Heart right ventricle (tissue), 16 donors: ENCODE measurements at regions of chr15 and their contacts with region 1.

Region 1: GRCh38 chr15:55789066-55789660 is 46.2 kb upstream of the PRTG start:
- DNase-seq: peak; percentile 24 to 38
- ATAC-seq: no peak
- H3K4me3 ChIP-seq: no peak overlapping the region
- H3K27ac ChIP-seq: no peak overlapping the region
- H3K4me1 ChIP-seq: no peaks in the 10 kb centered on the region
- H3K27me3 ChIP-seq: no peaks in the 10 kb centered on the region
- CTCF ChIP-seq: peak in 7 of 9 donors; percentile 39 to 63 (median 55)

Region 2: DNA sequence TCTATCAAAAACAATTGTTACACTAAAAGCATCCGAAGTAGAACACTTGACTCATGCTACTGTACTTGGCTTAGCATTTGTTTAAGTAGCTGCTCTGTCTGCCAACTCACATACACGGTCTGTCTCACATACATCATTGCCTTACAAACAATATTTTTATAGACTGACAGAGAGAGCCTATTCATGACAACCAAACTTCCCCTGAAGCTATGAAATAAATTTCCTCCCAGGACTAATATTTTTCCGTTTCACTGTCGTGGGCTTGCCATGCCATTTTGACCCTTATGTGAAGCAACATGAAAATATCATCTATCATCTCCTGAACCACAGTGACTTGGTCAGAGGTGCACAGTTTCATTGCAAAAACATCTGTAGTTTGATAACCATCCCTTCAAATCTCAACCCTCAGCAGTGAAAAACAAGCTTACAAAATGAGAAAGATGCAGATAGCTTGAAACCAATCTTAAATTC is 134.6 kb before region 1 on chr15:
- intact Hi-C with region 1: no loop called
- DNase-seq: no peak
- ATAC-seq: no peak
- H3K4me3 ChIP-seq: no peak overlapping the region
- H3K27ac ChIP-seq: no peak overlapping the region
- H3K4me1 ChIP-seq: no peaks in the 10 kb centered on the region
- H3K27me3 ChIP-seq: no peaks in the 10 kb centered on the region
- CTCF ChIP-seq: no peak

Region 3: DNA sequence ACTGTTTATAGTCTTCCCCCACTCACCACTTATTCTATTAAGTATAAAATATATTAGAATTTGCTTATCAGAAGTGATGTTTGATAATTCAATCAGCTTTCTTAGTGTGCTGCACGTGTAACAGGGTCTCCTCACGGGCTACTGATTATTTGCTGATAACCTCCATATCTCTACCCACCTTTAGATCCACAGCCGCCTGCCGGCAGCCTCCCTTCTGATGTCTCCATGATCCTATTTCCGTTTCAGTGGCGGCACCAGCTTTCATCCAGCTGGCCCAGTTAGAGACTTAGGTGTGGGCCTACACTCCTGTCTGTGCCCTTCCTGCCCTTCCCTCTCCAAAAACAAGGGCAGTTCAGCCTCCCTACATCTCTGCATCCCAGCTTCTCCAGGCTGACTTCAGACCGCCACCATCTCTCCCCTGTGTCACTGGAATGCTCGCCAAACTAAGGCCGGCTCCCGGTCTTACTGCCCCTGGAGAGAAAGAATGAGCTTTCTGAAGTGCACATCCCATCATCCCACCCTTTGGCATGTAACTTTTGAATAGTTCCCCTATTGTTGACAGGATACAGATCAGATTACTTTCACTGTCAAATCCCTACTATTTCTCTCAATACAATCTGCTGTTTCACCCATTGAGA is 30.4 kb after region 1 on chr15:
- intact Hi-C with region 1: no loop called
- DNase-seq: no peak
- ATAC-seq: no peak
- H3K4me3 ChIP-seq: no peak overlapping the region
- H3K27ac ChIP-seq: peak overlapping the region in 1 of 10 donors; percentile 30
- H3K4me1 ChIP-seq: peaks cover 0 to 17% (median 6%) of the 10 kb centered on the region in 9 donors
- H3K27me3 ChIP-seq: no peaks in the 10 kb centered on the region
- CTCF ChIP-seq: no peak

Region 4: GRCh38 chr15:55829826-55830225 is 40.7 kb after region 1 on chr15:
- intact Hi-C with region 1: loop called in 1 of 10 experiments (anchors 10 kb)
- DNase-seq: no peak
- ATAC-seq: no peak
- H3K4me3 ChIP-seq: no peak overlapping the region
- H3K27ac ChIP-seq: no peak overlapping the region
- H3K4me1 ChIP-seq: no peaks in the 10 kb centered on the region
- H3K27me3 ChIP-seq: no peaks in the 10 kb centered on the region
- CTCF ChIP-seq: no peak

Region 5: DNA sequence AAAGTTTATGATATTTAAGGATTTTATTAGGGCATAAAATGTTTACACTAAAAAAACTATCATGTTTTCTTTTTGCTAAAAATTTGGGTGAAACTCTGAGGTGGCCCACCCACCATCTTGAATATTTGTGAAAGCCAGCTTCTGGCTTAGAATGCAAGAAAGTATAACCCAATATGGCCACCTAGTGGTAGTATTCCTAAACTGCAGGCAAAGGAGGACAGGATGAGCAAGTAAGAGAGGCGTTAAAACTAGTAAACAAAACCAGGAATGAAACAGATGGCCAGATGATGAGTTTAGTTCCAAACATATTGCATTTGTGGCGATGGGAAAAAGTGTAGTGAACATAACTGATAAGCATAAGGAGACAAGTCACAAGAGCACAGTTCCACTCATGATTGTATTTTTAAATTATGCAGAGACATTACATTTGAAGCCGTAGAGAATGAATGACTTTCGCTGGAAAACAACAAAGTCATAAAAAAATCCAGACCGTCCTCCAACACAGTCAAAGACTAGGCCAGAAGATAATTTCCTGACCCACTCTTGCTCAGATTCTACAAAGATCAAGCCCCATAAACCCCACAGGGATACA is 57.0 kb after region 1 on chr15:
- intact Hi-C with region 1: loop called in 1 of 10 experiments (anchors 1 kb)
- DNase-seq: peak in 1 of 2 donors; percentile 78
- ATAC-seq: peak in 7 of 8 donors; percentile 43 to 68 (median 61)
- H3K4me3 ChIP-seq: no peak overlapping the region
- H3K27ac ChIP-seq: no peak overlapping the region
- H3K4me1 ChIP-seq: no peaks in the 10 kb centered on the region
- H3K27me3 ChIP-seq: no peaks in the 10 kb centered on the region
- CTCF ChIP-seq: peak; percentile 73 to 92 (median 88)

Region 6: GRCh38 chr15:55858661-55859060 is 69.5 kb after region 1 on chr15:
- intact Hi-C with region 1: no loop called
- DNase-seq: no peak
- ATAC-seq: no peak
- H3K4me3 ChIP-seq: no peak overlapping the region
- H3K27ac ChIP-seq: no peak overlapping the region
- H3K4me1 ChIP-seq: peaks cover 0 to 6% (median 0%) of the 10 kb centered on the region in 9 donors
- H3K27me3 ChIP-seq: no peaks in the 10 kb centered on the region
- CTCF ChIP-seq: no peak